Right ventricle myocardium inferior (tissue), 1 donor: ENCODE measurements at regions of chr9 and their contacts with region 1.

Region 1: DNA sequence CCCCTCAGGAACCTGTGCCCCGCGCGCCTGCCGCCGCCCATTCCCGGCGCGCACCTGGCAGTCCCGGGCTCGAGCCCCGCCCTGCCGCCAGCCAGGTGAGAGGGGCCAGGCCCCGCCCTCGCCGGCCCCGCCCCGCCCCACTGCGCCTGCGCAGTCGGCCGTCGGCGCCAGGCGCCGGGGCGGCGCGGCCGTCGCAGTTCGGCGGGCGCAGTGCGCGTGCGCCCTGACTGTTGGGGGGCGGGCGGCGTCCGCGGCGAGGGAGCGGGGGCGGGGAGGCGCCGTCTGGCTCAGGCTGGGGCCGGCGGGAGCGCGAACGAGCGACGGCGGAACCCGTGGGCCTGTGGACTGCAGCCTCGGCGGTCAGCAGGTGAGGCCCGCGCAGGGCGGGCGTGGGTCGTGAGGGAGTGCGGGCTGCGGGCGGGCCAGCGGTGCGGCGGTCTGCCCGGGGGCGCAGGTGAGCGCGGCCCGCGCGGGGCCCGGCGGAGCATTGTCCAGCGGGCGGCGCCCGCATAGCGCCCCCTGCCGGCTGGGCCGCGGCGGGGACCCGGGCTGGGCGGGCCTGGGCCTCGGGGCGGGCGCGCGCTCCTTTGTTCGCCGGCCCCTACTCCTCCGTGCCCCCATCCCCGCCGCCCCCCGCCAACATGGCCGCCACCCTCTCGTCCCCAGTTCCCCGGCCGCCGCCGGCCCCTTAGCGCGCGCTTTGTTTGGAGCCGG is at the start of gene SPIN1:
- DNase-seq: peak; percentile 90
- ATAC-seq: peak; percentile 83
- total RNA-seq, gene SPIN1: 48.8 TPM

Region 2: GRCh38 chr9:87973730-87974292 is 414.5 kb before region 1 on chr9:
- intact Hi-C with region 1: loop called (anchors 10 kb)
- DNase-seq: no peak
- ATAC-seq: peak; percentile 6

Region 3: DNA sequence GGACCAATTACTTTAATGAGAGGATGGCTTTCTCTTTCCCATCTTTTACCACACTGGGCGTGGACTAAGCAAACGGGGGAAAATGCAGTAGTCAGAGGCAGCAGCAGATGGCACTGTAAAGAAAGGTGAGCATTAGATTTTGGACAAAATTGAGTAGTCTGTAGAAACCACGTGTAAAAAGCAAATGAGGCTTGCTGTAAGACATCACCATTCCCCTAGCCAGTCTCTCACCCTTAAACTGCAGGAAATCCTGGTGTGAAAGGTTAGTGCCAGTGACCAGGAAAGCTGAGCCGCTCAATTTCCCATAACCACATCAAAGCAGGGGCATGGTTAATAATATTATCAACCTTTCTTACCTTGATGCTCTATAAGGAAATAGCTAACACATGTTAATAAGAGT is 281.8 kb before region 1 on chr9:
- intact Hi-C with region 1: loop called (anchors 5 kb)
- DNase-seq: no peak
- ATAC-seq: no peak

Region 4: DNA sequence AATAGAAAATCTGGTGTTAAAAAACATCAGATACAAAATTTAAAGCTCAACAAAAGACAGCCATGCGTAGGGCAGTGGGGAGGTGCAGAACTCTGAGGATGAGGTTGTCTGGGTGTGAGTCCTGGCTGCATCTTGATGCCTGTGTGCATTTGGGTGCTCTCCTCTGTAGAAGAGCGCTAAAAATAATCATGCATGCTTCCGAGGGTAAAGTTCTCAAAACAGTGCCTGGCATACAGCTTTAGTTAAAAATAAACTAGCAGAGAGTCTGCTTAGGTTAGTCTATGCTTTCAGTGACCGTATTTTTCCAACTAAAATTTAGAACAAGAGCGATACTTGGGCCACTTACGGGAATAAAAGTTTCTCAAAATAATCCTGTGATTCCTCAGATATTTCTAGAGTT is 194.6 kb before region 1 on chr9:
- intact Hi-C with region 1: loop called (anchors 5 kb)
- DNase-seq: no peak
- ATAC-seq: peak; percentile 80